ENCODE measurements at regions of chr1 and their contacts with region 1.

Region 1: GRCh38 chr1:64966158-64966971 is at the start of gene JAK1:
- DNase-seq: peak; percentile 73
- H3K4me3 Mint-ChIP-seq: peak within 1 kb of the TSS; percentile 82
- H3K27ac Mint-ChIP-seq: peak within 1 kb of the TSS; percentile 86
- H3K4me1 Mint-ChIP-seq: peaks cover 29% of the 10 kb centered on the region
- H3K27me3 Mint-ChIP-seq: no peaks in the 10 kb centered on the region
- CTCF ChIP-seq: no peak
- total RNA-seq, gene JAK1: 73.1 and 80.0 TPM in 2 replicates

Region 2: DNA sequence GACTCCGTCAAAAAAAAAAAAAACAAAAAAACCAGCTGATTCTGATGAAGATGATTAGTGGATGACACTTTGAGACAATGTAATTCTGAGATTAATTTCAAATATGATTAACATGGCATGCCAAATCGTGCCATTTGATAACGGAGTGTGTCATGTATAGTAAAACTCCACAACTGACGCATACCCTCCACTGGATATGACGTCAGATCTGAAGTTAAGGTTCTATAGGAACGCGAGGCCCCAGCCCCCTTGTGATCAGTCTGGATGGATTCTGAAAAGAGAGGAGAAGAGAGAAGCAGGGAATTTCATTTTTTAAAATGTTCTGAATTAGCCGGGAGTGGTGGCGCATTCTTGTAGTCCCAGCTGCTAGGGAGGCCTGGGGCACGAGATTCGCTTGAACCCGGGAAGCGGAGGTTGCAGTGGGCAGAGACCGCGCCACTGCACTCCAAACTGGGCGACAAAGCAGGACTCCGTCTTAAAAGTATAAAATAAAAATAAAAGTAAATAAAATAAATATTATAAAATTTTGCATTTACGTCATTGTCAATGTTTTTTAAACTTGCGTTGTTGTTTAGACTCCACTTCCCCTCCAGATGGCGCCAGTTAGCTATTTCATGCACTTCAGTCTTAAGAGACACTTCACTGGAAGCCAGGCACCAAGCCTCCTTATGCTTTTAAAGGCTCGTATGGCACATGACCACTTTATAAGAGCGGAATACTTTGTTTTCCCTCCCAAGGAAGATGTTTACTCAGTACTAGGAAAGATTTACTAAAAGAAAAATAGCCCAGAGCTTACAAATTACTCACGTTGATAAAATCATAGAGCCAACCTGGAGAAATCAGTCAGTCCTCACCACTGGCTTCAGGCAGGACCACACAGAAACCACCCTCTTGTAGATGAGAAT is 697.5 kb before region 1 on chr1:
- CTCF ChIA-PET with region 1: no interaction called
- POLR2A ChIA-PET with region 1: no interaction called
- intact Hi-C with region 1: loop called (anchors 10 kb)
- DNase-seq: peak; percentile 84
- H3K4me3 Mint-ChIP-seq: no peak overlapping the region
- H3K27ac Mint-ChIP-seq: no peak overlapping the region
- H3K4me1 Mint-ChIP-seq: peaks cover 3% of the 10 kb centered on the region
- H3K27me3 Mint-ChIP-seq: no peaks in the 10 kb centered on the region
- CTCF ChIP-seq: peak; percentile 87

Region 3: DNA sequence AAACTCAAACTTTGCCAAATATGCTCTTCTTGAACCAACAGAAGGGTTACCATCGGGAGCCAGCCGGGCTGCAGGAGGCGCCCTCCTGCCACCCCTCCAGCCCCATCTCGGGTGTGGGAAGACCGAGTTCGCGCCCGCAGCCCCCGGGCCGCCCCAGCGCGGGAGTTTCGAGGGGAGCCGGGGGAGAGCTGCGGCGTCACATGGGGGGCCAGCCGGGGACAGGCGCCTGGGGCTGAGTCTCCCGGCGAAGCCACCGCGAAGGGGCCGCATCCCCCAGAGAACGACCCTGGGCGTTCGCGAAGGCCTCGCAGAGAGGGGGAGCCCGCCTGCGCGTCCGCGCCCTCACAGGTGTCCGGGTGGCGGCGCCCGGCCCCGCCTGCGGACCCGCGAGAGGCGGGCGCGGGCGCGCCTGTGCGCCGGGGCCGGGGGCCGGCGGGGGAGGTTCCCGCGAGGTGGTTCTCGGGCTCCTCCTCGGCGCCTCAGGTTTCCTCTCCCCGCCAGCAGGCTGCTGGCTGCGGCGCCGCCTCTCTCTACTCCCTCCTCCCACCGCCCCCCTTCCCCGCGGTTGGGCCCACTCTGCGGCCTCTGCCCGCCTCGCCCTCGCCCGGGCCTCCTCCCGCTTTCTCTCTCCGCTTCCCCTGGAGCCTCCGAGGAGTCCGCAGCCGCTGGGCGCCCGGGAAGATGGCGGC is 221.7 kb before region 1 on chr1 and contains the start of gene RAVER2:
- CTCF ChIA-PET with region 1: no interaction called
- POLR2A ChIA-PET with region 1: interaction called, 3 read pairs
- intact Hi-C with region 1: loop called (anchors 5 kb)
- DNase-seq: peak; percentile 79
- H3K4me3 Mint-ChIP-seq: peak within 1 kb of the TSS; percentile 80
- H3K27ac Mint-ChIP-seq: peak within 1 kb of the TSS; percentile 31
- H3K4me1 Mint-ChIP-seq: peaks cover 21% of the 10 kb centered on the region
- H3K27me3 Mint-ChIP-seq: no peaks in the 10 kb centered on the region
- CTCF ChIP-seq: peak; percentile 53
- total RNA-seq, gene RAVER2: 5.3 and 5.9 TPM in 2 replicates

Region 4: DNA sequence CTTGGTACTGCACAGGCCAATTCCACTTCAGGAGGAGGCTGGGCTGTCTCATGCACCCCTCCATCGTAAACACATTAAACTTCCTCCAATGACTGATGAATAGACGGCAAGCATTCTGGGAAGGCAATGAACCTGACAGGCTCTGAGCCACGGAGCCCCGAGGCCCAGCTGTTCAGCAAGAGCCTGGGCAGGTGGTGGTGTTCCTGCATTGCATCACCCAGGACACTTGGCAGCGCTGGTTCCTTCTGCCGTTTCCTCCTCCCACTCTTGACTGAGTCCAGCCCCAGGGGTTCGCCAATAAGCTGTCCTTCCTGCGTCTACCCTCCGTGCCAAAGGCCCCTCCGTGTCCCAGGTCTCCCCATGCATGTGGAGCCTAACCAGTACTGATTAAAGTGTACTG is 109.8 kb before region 1 on chr1:
- CTCF ChIA-PET with region 1: no interaction called
- POLR2A ChIA-PET with region 1: no interaction called
- intact Hi-C with region 1: loop called (anchors 1 kb)
- DNase-seq: peak; percentile 49
- H3K4me3 Mint-ChIP-seq: no peak overlapping the region
- H3K27ac Mint-ChIP-seq: peak overlapping the region; percentile 54
- H3K4me1 Mint-ChIP-seq: peaks cover 5% of the 10 kb centered on the region
- H3K27me3 Mint-ChIP-seq: no peaks in the 10 kb centered on the region
- CTCF ChIP-seq: no peak

Region 5: DNA sequence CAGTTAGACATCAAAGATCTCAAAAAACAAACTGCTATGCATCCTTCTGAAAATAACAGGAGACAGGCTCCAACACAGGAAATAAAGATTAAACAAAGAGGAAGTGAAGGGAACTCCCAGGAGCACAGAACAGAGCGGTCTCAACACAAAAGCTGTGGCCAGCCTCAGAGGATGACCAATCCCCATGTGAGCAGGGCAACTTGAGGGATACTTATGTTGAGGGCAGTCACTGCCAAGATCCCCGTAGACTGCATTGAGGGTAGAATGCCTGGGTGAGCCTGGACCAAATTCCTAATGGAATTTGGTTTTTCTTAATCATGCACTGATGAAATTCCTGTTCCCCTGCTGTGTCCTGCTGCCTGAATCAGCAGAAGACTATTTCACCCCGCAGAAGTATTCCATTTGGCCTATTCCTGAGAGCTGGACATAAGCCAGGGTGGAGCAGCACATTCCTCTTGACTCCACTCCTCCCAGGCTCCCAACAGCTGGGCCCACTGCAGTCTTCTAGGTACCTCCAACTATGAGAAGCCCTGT is 49.0 kb before region 1 on chr1:
- CTCF ChIA-PET with region 1: interaction called, 3 read pairs
- POLR2A ChIA-PET with region 1: interaction called, 18 read pairs
- intact Hi-C with region 1: no loop called
- DNase-seq: peak; percentile 93
- H3K4me3 Mint-ChIP-seq: no peak overlapping the region
- H3K27ac Mint-ChIP-seq: peak overlapping the region; percentile 80
- H3K4me1 Mint-ChIP-seq: peaks cover 49% of the 10 kb centered on the region
- H3K27me3 Mint-ChIP-seq: no peaks in the 10 kb centered on the region
- CTCF ChIP-seq: no peak

Region 6: GRCh38 chr1:64948905-64949833 is 17.2 kb before region 1 on chr1:
- CTCF ChIA-PET with region 1: interaction called, 5 read pairs
- POLR2A ChIA-PET with region 1: interaction called, 49 read pairs
- intact Hi-C with region 1: no loop called
- DNase-seq: peak; percentile 79
- H3K4me3 Mint-ChIP-seq: peak overlapping the region; percentile 18
- H3K27ac Mint-ChIP-seq: peak overlapping the region; percentile 81
- H3K4me1 Mint-ChIP-seq: peaks cover 44% of the 10 kb centered on the region
- H3K27me3 Mint-ChIP-seq: no peaks in the 10 kb centered on the region
- CTCF ChIP-seq: no peak

Measured in MCF 10A (cell line).